Mammary epithelial cell (primary cell): ENCODE measurements at regions of chr13 and their contacts with region 1.

Region 1: DNA sequence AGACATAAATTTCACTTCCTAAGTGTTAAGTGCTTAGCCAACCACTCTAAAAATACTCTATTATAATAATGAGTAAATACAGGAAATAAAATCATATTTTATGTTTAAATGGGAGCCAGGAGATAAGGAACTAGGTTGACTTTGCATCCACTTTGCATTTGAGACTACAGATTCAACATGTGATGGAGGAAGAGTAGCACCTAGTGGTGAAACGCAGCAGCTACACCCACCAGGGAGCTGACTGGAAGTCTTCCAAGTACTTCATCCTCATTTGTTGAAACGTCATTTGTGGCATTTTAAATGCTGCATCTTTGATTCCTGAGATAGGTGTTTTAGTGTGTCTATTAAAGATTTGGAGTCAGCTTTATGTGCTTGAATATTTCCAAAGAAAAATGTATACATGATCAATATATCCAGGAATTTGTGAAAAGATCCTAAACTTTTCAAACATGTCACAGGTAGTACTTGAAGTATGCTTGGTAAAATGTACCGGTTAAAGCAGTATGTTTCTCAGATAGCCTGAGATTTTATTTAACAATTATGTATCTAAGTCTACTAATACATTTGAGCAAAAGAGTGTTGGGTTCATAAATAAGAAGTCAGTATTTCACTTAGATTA is 17.4 kb upstream of the KCTD12 start:
- DNase-seq: peak; percentile 64
- H3K4me3 ChIP-seq: no peak overlapping the region
- H3K27ac ChIP-seq: no peak overlapping the region
- H3K4me1 ChIP-seq: no peaks in the 10 kb centered on the region
- H3K27me3 ChIP-seq: peaks cover 1% of the 10 kb centered on the region
- CTCF ChIP-seq: peak; percentile 99 to 100

Region 2: DNA sequence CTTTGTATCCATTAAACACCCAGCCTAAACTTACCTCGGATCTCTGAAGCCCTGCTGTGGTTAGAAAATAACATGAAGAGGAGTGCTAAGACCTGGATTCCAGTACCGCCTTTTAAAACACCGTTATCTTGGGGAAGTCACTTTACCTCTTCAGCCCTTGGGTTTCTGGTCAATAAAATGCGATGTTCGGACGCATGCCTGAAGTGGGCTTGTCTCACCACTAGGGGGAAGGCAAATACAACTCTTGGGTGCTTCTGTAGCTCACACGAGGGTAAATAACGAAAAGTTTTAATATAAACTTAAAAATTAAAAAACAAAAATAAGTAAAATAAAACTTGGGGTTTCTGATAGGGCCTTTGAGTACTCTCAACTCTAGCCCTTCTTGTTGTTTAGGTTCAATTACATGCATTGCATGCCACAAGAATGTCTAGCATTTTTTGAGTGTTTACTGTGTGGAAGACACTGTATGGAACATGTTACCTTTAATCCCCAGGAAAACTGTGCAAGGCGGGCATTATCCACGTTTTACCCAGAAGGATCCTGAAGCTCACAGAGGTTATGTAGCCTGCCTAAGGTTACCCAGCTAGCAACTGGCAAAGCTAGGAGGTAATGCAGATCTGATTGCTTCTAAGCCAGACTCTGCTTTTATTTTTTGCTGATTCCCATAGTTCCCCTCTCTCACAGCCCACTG is 1027.1 kb before region 1 on chr13:
- CTCF ChIA-PET with region 1: interaction called, 3 read pairs
- dilution Hi-C with region 1: loop called (anchors 25 kb)
- in situ Hi-C with region 1: loop called (anchors 10 to 25 kb)
- intact Hi-C with region 1: loop called (anchors 1 kb)
- DNase-seq: peak; percentile 53
- H3K4me3 ChIP-seq: no peak overlapping the region
- H3K27ac ChIP-seq: no peak overlapping the region
- H3K4me1 ChIP-seq: no peaks in the 10 kb centered on the region
- H3K27me3 ChIP-seq: peaks cover 1% of the 10 kb centered on the region
- CTCF ChIP-seq: peak; percentile 96 to 97

Region 3: DNA sequence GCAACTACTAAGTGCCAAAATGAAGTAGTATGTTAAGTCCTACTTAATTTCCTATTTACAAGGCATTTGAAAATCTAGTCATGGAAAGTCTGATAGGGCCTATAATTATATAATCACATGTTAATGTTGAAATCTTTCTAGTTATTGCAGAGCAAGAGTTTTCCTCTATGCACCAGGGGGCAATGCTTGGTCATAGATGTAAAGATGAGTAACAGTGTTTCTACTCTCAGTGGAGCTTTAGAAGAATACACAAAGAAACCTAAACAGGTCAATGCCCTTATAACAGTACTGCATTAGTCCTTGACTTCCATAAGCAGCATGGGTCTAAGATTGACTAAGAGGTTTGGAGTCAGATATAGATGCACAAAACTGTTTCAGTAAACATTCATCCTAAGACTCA is 236.1 kb before region 1 on chr13:
- CTCF ChIA-PET with region 1: no interaction called
- dilution Hi-C with region 1: no loop called
- in situ Hi-C with region 1: no loop called
- intact Hi-C with region 1: loop called (anchors 1 kb)
- DNase-seq: peak; percentile 16
- H3K4me3 ChIP-seq: no peak overlapping the region
- H3K27ac ChIP-seq: no peak overlapping the region
- H3K4me1 ChIP-seq: no peaks in the 10 kb centered on the region
- H3K27me3 ChIP-seq: peaks cover 4% of the 10 kb centered on the region
- CTCF ChIP-seq: peak; percentile 18 to 37

Region 4: GRCh38 chr13:76886292-76887075 is 17.2 kb before region 1 on chr13 and contains the start of gene KCTD12:
- CTCF ChIA-PET with region 1: interaction called, 5 read pairs
- dilution Hi-C with region 1: no loop called
- in situ Hi-C with region 1: no loop called
- intact Hi-C with region 1: loop called (anchors 1 kb)
- DNase-seq: peak; percentile 78
- H3K4me3 ChIP-seq: peak within 1 kb of the TSS; percentile 51 to 85 (median 81)
- H3K27ac ChIP-seq: peak within 1 kb of the TSS; percentile 55
- H3K4me1 ChIP-seq: peaks cover 60% of the 10 kb centered on the region
- H3K27me3 ChIP-seq: no peaks in the 10 kb centered on the region
- CTCF ChIP-seq: no peak
- total RNA-seq, gene KCTD12: 57.0 to 80.1 TPM

Region 5: GRCh38 chr13:77065461-77066147 is 162.0 kb after region 1 on chr13:
- CTCF ChIA-PET with region 1: no interaction called
- dilution Hi-C with region 1: no loop called
- in situ Hi-C with region 1: no loop called
- intact Hi-C with region 1: no loop called
- DNase-seq: no peak
- H3K4me3 ChIP-seq: no peak overlapping the region
- H3K27ac ChIP-seq: no peak overlapping the region
- H3K4me1 ChIP-seq: no peaks in the 10 kb centered on the region
- H3K27me3 ChIP-seq: no peaks in the 10 kb centered on the region
- CTCF ChIP-seq: no peak